ENCODE measurements at regions of chr12 and their contacts with region 1.

Region 1: DNA sequence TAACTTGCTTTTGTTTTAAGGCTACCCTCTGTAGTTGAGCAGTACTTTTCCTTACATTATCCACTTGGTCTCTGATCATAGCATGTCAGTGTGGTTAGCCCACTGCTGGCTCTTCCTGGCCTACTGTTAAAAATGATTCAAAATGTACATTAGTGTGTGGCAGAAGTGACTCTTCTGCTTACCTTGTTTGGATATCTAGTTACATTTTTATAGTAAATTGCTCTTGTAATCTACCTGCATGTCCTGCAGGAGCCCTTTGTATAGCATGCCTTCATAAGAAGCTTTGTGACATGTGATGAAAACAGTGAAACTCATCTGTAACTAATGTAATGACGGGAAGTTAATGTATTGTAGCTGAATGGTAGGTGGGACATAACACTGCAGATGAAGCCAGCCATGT is 8.1 kb downstream of the SPATS2 start:
- DNase-seq: no peak
- H3K4me3 ChIP-seq: no peak overlapping the region
- H3K27ac ChIP-seq: no peak overlapping the region
- H3K4me1 ChIP-seq: no peaks in the 10 kb centered on the region
- H3K27me3 ChIP-seq: no peaks in the 10 kb centered on the region
- CTCF ChIP-seq: no peak

Region 2: GRCh38 chr12:49456131-49456679 is 80.8 kb after region 1 on chr12:
- CTCF ChIA-PET with region 1: no interaction called
- dilution Hi-C with region 1: loop called (anchors 5 kb)
- in situ Hi-C with region 1: no loop called
- intact Hi-C with region 1: no loop called
- DNase-seq: no peak
- H3K4me3 ChIP-seq: no peak overlapping the region
- H3K27ac ChIP-seq: no peak overlapping the region
- H3K4me1 ChIP-seq: no peaks in the 10 kb centered on the region
- H3K27me3 ChIP-seq: no peaks in the 10 kb centered on the region
- CTCF ChIP-seq: no peak

Region 3: DNA sequence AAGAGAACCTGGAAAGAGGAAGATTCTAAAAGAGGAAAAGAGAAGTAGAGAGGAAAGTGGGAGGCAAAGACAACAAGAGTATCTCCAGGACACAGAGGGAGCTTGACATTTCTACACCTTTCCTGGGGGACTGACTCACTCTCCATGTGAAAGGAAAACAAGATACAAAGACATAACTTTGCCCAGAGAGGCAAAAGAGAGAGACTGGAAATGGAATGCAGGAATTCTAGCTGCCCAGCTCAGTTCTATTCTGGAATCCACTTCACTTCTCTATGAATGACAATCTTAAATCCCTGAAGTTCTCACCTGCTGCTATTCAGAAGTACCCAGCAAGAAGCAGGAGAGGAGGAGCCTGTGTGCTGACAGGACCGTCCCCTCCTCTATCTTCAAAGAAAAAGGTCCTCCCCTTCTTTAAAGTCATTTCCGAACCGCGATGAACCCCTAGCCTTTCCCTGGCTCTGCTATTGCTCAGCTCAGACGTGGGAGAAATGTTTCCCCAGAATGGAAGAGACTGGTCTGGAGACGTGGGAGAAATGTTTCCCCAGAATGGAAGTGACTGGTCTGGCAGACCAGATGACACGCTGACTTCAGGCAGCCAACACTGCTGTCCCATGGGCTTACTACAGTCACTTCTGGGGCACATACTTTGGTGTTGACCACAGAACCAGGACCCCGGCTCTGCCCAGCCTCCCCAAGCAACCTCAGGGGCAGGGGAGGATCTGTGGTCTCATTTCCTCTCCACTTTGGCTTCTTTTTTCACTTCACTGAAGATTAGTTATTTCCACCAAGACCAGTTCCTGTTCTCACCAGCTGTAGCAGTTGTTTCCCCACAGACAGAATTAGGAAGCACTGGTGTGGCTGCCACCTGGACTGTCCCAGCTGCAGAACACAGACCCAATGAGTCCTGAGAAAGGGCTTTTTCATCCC is 323.5 kb after region 1 on chr12:
- CTCF ChIA-PET with region 1: no interaction called
- dilution Hi-C with region 1: no loop called
- in situ Hi-C with region 1: no loop called
- intact Hi-C with region 1: no loop called
- DNase-seq: peak; percentile 52
- H3K4me3 ChIP-seq: no peak overlapping the region
- H3K27ac ChIP-seq: no peak overlapping the region
- H3K4me1 ChIP-seq: peaks cover 16% of the 10 kb centered on the region
- H3K27me3 ChIP-seq: no peaks in the 10 kb centered on the region
- CTCF ChIP-seq: no peak

Measured in mammary epithelial cell (primary cell).